Mammary epithelial cell (primary cell): ENCODE measurements at regions of chr2 and their contacts with region 1.

Region 1: GRCh38 chr2:11344342-11344955 is at the start of gene ROCK2:
- DNase-seq: peak; percentile 74
- H3K4me3 ChIP-seq: peak within 1 kb of the TSS; percentile 91 to 96 (median 92)
- H3K27ac ChIP-seq: peak within 1 kb of the TSS; percentile 93
- H3K4me1 ChIP-seq: peaks cover 24% of the 10 kb centered on the region
- H3K27me3 ChIP-seq: no peaks in the 10 kb centered on the region
- CTCF ChIP-seq: no peak
- total RNA-seq, gene ROCK2: 38.6 to 44.0 TPM

Region 2: GRCh38 chr2:11228692-11229091 is 115.8 kb before region 1 on chr2:
- CTCF ChIA-PET with region 1: no interaction called
- dilution Hi-C with region 1: no loop called
- in situ Hi-C with region 1: no loop called
- intact Hi-C with region 1: no loop called
- DNase-seq: no peak
- H3K4me3 ChIP-seq: no peak overlapping the region
- H3K27ac ChIP-seq: no peak overlapping the region
- H3K4me1 ChIP-seq: no peaks in the 10 kb centered on the region
- H3K27me3 ChIP-seq: no peaks in the 10 kb centered on the region
- CTCF ChIP-seq: no peak

Region 3: DNA sequence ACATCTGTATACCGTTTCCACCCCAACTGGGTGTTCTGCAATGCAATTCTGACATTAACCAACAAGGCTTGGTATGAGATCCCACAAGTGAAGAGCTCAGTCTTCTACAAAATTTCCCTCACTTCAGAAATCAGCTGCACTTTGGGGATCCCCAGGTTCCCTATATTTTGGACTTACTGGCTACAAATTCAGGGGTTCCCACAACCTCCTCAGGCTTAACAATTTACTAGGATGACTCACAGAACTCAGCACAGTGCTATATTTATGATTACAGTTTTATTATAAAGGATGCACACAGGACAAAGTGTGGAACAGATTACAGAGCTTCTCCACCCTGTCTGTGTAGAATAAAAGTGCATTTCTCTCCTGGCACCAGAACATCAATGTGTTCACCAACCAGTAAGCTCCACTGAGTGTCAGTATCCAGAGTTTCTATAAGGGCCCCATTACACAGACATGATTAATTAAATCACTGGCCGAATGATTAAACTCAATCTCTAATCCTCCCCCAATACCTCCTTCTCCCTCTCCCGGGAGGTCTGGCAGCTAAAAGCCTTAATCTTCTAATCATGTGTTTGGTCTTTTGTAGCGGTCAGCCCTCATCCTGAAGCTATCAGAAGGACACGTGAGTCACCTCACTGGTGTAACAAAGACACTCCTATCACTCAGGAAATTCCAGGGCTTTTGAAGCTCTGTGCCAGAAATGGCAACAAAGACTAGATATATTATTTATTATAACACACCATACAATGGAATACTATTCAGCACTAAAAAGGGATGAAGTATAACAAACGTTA is 104.6 kb before region 1 on chr2:
- CTCF ChIA-PET with region 1: no interaction called
- dilution Hi-C with region 1: no loop called
- in situ Hi-C with region 1: no loop called
- intact Hi-C with region 1: loop called (anchors 5 kb)
- DNase-seq: peak; percentile 57
- H3K4me3 ChIP-seq: no peak overlapping the region
- H3K27ac ChIP-seq: no peak overlapping the region
- H3K4me1 ChIP-seq: peaks cover 8% of the 10 kb centered on the region
- H3K27me3 ChIP-seq: no peaks in the 10 kb centered on the region
- CTCF ChIP-seq: no peak

Region 4: GRCh38 chr2:11254100-11254536 is 90.3 kb before region 1 on chr2:
- CTCF ChIA-PET with region 1: no interaction called
- dilution Hi-C with region 1: no loop called
- in situ Hi-C with region 1: no loop called
- intact Hi-C with region 1: loop called (anchors 5 kb)
- DNase-seq: no peak
- H3K4me3 ChIP-seq: no peak overlapping the region
- H3K27ac ChIP-seq: no peak overlapping the region
- H3K4me1 ChIP-seq: peaks cover 8% of the 10 kb centered on the region
- H3K27me3 ChIP-seq: no peaks in the 10 kb centered on the region
- CTCF ChIP-seq: no peak

Region 5: DNA sequence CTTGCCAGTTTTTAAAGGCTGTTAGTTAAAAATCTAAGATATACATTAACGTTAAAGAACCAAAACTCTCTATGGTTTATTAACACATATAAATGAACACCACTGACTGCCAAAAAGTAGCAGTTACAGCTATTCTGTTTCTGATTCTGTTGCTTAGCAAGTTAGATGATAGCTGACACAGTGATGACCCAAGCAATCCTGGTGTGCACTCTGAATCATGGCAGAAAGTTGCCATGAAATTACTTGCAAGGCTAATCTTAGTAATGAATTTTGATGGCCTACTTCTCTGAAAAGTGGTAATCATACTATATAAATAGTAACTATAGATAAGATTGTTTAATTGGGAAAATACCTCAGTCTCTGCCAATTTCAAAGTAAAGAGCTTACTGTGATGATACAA is 57.7 kb before region 1 on chr2:
- CTCF ChIA-PET with region 1: no interaction called
- dilution Hi-C with region 1: no loop called
- in situ Hi-C with region 1: no loop called
- intact Hi-C with region 1: loop called (anchors 5 kb)
- DNase-seq: no peak
- H3K4me3 ChIP-seq: no peak overlapping the region
- H3K27ac ChIP-seq: no peak overlapping the region
- H3K4me1 ChIP-seq: no peaks in the 10 kb centered on the region
- H3K27me3 ChIP-seq: no peaks in the 10 kb centered on the region
- CTCF ChIP-seq: no peak

Region 6: DNA sequence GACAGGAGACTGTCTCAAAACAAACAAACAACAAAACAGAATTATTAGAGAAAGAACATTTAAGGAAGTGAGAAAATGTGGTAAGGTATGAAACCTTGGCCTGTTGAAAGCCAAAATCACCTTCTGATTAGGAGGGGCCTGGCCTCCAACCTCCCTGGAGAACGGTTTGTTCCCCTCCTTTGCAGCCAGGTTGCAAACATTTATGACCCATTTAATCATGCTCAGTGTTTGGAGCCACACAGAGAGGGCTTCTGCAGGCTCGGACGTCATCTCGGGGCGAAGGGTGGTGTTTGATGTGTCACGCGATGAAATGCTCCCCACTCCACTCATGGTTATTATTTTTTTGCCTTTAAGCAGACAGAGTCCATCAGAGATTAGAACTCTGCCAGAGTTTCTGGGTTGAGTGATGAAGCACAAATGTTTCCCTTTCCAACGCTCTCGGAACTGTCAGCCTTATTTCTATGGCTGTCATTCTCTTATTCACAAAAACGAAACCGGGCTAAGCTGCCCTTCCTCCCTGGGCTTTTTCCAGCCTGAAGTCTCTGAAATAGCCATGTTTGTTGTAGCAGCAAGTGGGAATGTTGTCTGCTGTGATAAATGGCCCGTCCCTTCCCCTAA is 33.6 kb after region 1 on chr2:
- CTCF ChIA-PET with region 1: no interaction called
- dilution Hi-C with region 1: no loop called
- in situ Hi-C with region 1: no loop called
- intact Hi-C with region 1: loop called (anchors 1 kb)
- DNase-seq: no peak
- H3K4me3 ChIP-seq: no peak overlapping the region
- H3K27ac ChIP-seq: no peak overlapping the region
- H3K4me1 ChIP-seq: peaks cover 32% of the 10 kb centered on the region
- H3K27me3 ChIP-seq: no peaks in the 10 kb centered on the region
- CTCF ChIP-seq: no peak

Region 7: DNA sequence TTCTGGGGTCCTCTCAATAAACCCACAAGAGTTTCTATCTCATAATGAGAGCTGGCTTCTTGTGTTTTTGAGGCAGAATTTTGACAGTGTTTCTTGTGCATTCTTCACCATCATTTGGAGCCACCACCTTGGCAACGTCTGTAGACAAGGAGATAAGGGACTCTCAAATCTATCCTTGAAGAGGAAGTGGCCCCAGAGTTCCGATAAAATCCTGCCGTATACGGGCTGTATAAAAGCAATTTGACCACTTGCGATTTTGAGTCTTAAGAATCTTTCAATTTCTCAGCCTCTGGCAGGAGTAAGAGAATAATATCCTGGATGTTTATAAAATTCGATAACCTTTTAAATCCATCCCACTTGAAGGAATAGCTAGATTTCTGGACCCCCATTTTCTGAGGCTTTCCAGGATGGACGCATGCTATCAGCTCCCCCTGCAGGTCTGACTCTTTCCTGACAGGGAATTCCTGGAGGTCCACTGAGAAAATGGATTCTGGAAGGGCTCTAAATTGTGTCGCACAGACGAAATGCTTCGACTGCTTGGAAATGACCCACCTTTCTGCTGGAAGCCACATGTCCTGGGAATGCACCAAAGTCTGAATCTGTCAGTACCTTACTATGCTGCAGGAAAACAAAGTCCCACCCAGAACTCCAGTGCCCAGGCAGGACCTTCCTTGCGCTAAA is 67.5 kb after region 1 on chr2:
- CTCF ChIA-PET with region 1: no interaction called
- dilution Hi-C with region 1: no loop called
- in situ Hi-C with region 1: no loop called
- intact Hi-C with region 1: loop called (anchors 2 kb)
- DNase-seq: no peak
- H3K4me3 ChIP-seq: no peak overlapping the region
- H3K27ac ChIP-seq: no peak overlapping the region
- H3K4me1 ChIP-seq: no peaks in the 10 kb centered on the region
- H3K27me3 ChIP-seq: no peaks in the 10 kb centered on the region
- CTCF ChIP-seq: peak; percentile 72 to 84

Region 8: GRCh38 chr2:11446733-11447248 is 102.3 kb after region 1 on chr2:
- CTCF ChIA-PET with region 1: no interaction called
- dilution Hi-C with region 1: no loop called
- in situ Hi-C with region 1: no loop called
- intact Hi-C with region 1: loop called (anchors 2 kb)
- DNase-seq: peak; percentile 48
- H3K4me3 ChIP-seq: no peak overlapping the region
- H3K27ac ChIP-seq: no peak overlapping the region
- H3K4me1 ChIP-seq: no peaks in the 10 kb centered on the region
- H3K27me3 ChIP-seq: no peaks in the 10 kb centered on the region
- CTCF ChIP-seq: peak; percentile 71 to 88